ENCODE measurements at regions of chr9 and their contacts with region 1.

Region 1: GRCh38 chr9:36976371-36977028 is 57.6 kb downstream of the PAX5 start:
- DNase-seq: peak; percentile 89
- ATAC-seq: peak; percentile 80
- H3K4me3 ChIP-seq: no peak overlapping the region
- H3K27ac ChIP-seq: peak overlapping the region; percentile 57
- H3K4me1 ChIP-seq: peaks cover 22% of the 10 kb centered on the region
- H3K27me3 ChIP-seq: no peaks in the 10 kb centered on the region
- CTCF ChIP-seq: no peak

Region 2: DNA sequence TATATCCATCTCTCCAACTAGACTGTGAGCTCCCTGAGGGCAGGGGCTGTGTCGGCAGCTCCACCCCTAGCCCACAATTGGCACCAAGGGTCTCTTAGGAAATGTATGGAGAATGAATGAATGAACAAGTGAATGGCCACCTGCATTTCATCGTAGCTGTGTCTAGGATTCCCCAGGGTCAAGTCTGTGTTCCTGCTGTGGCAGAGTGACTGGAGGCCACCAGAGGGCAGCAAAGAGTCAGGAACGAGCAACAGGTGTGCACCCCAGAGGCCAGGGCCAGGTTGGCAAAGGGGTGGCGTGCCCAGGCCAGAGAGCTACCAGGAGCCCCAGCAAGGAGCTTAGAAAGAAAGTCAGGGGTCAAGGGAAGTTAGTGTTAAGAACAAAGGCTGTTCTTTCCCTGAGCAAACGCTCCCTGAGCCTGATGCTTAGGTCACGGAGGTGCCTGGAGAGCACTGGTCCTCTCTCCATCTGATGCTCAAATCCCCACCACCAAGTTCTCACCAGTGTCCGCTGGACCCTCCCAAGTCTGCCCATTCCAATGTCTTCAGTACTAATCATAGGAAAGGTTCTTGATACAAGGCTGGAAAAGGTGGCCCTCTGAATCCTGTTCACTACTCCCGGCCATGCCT is 103.1 kb before region 1 on chr9:
- CTCF ChIA-PET with region 1: no interaction called
- POLR2A ChIA-PET with region 1: no interaction called
- intact Hi-C with region 1: loop called (anchors 1 kb)
- DNase-seq: peak; percentile 66
- ATAC-seq: peak; percentile 89
- H3K4me3 ChIP-seq: no peak overlapping the region
- H3K27ac ChIP-seq: no peak overlapping the region
- H3K4me1 ChIP-seq: no peaks in the 10 kb centered on the region
- H3K27me3 ChIP-seq: peaks cover 6% of the 10 kb centered on the region; the same call in 1 of the 2 replicates
- CTCF ChIP-seq: peak; percentile 87

Region 3: DNA sequence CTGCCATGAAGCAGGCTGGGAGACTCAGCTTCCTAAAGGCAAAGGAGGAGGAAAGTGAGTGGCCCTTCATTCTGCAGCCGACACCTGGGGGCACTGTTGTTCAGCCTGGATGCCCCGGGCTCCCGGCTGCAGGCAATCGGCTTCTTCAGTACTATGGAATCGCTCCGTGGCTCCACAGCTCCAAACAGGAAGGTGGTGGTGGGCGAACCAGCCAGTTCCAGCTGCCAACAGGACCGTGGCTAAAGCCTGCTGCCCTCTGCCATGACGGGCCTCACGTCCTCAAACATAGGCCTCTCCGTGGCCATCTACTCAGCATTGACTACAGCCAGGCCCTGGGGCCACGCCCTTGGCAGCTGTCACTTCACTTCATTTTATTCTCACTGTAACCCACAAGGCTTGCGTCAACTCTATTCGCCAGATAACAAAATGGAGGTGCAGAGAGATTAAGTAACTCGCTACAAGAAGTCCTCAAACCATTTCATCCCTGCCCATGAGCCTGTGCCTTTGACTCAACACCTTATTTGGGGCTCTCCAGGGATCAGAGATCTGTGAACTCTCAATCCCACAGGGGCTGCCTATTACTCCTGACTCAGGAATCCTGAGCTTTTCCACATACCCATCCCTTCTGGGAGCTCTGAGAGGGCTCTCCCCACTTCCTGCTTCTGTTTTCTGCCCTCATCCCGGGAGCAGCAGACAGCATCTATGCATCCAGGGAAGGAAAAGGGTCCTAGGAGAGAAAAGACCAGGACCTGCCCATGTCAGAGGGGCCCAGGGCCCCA is 19.6 kb after region 1 on chr9:
- CTCF ChIA-PET with region 1: no interaction called
- POLR2A ChIA-PET with region 1: no interaction called
- intact Hi-C with region 1: no loop called
- DNase-seq: peak; percentile 69
- ATAC-seq: peak; percentile 83
- H3K4me3 ChIP-seq: peak overlapping the region; percentile 56
- H3K27ac ChIP-seq: no peak overlapping the region
- H3K4me1 ChIP-seq: peaks cover 13% of the 10 kb centered on the region
- H3K27me3 ChIP-seq: no peaks in the 10 kb centered on the region
- CTCF ChIP-seq: peak; percentile 75